ENCODE measurements at regions of chr15 and their contacts with region 1.

Region 1: DNA sequence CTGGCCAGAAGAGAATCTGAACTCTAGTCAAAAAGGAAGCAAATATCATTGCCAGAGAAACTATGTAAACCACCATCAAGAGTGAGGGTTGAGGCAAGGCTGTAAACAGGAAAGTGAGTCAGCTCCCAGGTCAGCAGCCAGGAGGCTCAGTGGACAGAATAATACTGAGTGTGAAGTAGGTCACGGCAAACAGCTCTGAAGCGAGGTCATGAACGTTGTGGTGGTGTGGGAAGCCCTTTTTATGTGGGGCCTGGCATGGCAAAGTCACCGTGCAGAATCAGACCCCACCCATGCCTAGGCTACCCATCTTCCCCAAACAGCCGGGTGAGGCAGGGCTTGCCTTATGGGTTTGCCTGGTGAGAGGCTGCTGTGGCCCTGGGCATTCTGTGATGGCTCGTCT is 43.9 kb downstream of the THBS1 start:
- DNase-seq: peak; percentile 83
- ATAC-seq: peak; percentile 79
- H3K4me3 Mint-ChIP-seq: peak overlapping the region; percentile 62
- H3K27ac Mint-ChIP-seq: peak overlapping the region; percentile 97
- H3K4me1 Mint-ChIP-seq: peaks cover 85% of the 10 kb centered on the region
- H3K27me3 Mint-ChIP-seq: no peaks in the 10 kb centered on the region

Region 2: DNA sequence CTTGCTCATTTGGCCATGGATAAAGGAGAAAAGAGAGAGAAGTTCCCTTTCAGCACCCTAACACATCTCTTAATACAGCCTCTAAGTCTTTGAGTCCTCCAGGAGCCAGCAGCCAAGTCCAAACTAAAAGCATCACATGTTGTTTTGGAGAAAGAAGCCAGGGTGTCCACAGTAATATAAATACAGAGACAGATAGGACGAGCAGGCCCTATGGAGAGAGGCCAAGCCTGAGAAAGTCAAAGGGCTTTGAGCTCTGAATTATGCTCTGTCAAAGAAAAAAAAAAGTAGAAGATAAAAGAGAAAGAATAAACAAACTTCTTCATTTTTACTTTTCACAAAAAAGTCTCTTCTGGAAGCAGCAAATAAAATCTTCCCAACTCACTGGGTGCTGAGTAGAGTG is 136.3 kb before region 1 on chr15:
- CTCF ChIA-PET with region 1: no interaction called
- POLR2A ChIA-PET with region 1: no interaction called
- DNase-seq: no peak
- ATAC-seq: no peak
- H3K4me3 Mint-ChIP-seq: no peak overlapping the region
- H3K27ac Mint-ChIP-seq: no peak overlapping the region
- H3K4me1 Mint-ChIP-seq: no peaks in the 10 kb centered on the region
- H3K27me3 Mint-ChIP-seq: peaks cover 4% of the 10 kb centered on the region

Region 3: GRCh38 chr15:39543651-39544050 is 81.2 kb before region 1 on chr15:
- CTCF ChIA-PET with region 1: no interaction called
- POLR2A ChIA-PET with region 1: no interaction called
- DNase-seq: no peak
- ATAC-seq: no peak
- H3K4me3 Mint-ChIP-seq: no peak overlapping the region
- H3K27ac Mint-ChIP-seq: no peak overlapping the region
- H3K4me1 Mint-ChIP-seq: no peaks in the 10 kb centered on the region
- H3K27me3 Mint-ChIP-seq: peaks cover 5% of the 10 kb centered on the region

Region 4: DNA sequence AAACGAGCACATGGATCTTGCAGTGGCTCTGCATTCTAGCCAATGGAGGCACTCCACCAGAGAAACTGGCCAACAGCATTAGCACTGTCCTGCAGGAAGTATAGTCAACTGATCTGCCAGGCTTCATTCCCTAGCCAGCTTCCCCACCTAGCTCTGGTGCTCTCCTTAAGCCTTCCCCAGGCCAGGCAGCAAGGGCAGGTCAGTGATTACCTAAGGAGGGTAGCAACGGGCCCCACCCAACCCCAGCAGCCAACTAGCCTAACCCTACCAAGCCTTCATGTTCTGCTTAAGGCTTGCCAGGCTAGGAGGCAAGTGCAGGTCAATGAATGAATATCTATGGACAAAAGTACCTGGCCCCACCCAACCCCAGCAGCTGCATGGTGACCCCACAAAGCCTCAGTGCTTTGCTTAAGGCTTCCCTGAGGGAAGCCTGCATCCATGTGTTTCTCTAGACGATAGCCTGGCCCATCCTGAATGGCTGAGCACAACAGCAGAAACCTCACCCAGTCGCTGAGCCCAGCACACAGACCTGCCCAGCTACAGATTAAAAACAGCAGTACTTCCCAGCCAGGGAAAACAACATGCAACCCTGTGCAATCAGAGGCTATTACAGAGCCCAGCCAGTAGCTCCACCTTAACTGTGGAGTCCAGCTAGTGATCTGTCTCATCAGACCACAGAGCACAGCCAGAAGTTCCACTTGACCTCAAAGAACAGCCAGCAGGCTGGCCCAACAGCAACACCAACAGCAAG is 15.5 kb before region 1 on chr15:
- CTCF ChIA-PET with region 1: interaction called, 17 read pairs
- POLR2A ChIA-PET with region 1: no interaction called
- DNase-seq: no peak
- ATAC-seq: no peak
- H3K4me3 Mint-ChIP-seq: no peak overlapping the region
- H3K27ac Mint-ChIP-seq: peak overlapping the region; percentile 53
- H3K4me1 Mint-ChIP-seq: peaks cover 23% of the 10 kb centered on the region
- H3K27me3 Mint-ChIP-seq: peaks cover 3% of the 10 kb centered on the region

Region 5: GRCh38 chr15:39642011-39642640 is 17.3 kb after region 1 on chr15:
- CTCF ChIA-PET with region 1: interaction called, 28 read pairs
- POLR2A ChIA-PET with region 1: interaction called, 15 read pairs
- DNase-seq: no peak
- ATAC-seq: no peak
- H3K4me3 Mint-ChIP-seq: no peak overlapping the region
- H3K27ac Mint-ChIP-seq: no peak overlapping the region
- H3K4me1 Mint-ChIP-seq: peaks cover 21% of the 10 kb centered on the region
- H3K27me3 Mint-ChIP-seq: peaks cover 10% of the 10 kb centered on the region

Region 6: GRCh38 chr15:39699516-39700374 is 74.9 kb after region 1 on chr15:
- CTCF ChIA-PET with region 1: no interaction called
- POLR2A ChIA-PET with region 1: no interaction called
- DNase-seq: no peak
- ATAC-seq: no peak
- H3K4me3 Mint-ChIP-seq: no peak overlapping the region
- H3K27ac Mint-ChIP-seq: no peak overlapping the region
- H3K4me1 Mint-ChIP-seq: no peaks in the 10 kb centered on the region
- H3K27me3 Mint-ChIP-seq: peaks cover 6% of the 10 kb centered on the region

Region 7: GRCh38 chr15:39852250-39852649 is 227.4 kb after region 1 on chr15:
- CTCF ChIA-PET with region 1: no interaction called
- POLR2A ChIA-PET with region 1: no interaction called
- DNase-seq: no peak
- ATAC-seq: no peak
- H3K4me3 Mint-ChIP-seq: no peak overlapping the region
- H3K27ac Mint-ChIP-seq: no peak overlapping the region
- H3K4me1 Mint-ChIP-seq: no peaks in the 10 kb centered on the region
- H3K27me3 Mint-ChIP-seq: peaks cover 37% of the 10 kb centered on the region